ENCODE measurements at regions of chr5 and their contacts with region 1.

Region 1: GRCh38 chr5:1053391-1054017 is 44.9 kb downstream of the NKD2 start:
- DNase-seq: no peak

Region 2: DNA sequence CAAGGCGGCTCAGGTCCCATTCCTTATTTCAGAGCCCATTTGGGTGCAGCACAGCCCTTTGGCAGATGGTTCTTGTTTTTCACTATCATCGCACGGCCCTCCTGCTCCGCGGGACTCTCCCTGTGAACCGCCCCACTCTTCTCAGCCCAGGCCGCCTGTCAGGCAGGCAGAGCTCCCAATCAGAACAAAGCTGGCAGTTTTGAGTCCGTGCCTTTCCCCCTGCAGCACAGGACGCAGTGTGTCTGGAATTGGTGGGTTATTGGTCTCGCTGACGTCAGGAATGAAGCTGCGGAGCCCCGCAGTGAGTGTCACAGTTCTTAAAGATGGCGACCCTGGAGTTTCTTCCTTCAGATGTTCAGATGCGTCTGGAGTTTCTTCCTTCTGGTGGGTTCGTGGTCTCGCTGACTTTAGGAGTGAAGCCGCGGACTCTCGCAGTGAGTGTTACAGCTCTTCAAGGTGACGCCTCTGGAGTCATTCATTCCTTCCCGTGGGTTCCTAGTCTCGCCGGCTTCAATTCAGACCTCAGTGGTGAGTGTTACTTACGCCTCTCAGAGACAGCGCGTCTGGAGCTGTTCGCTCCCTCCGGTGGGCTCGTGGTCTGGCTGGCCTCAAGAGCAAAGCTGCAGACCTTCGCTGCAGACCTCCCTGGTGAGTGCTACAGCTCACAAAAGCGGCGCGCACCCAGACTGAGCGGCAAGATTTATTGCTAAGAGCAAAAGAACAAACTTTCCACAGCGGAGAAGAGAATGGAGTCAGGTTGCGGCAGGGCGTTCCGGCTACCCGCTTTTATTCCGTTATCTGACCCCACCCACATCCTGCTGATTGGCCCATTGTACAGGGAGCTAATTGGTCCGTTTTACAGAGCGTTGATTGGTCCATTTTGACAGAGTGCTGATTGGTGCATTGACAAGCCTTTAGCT is 276.5 kb before region 1 on chr5:
- intact Hi-C with region 1: no loop called
- DNase-seq: no peak

Region 3: GRCh38 chr5:1140171-1140817 is 86.8 kb after region 1 on chr5:
- intact Hi-C with region 1: loop called (anchors 2 kb)
- DNase-seq: peak; percentile 86